ENCODE measurements at regions of chr6 and their contacts with region 1.

Region 1: GRCh38 chr6:142692942-142693341 is 252.0 kb downstream of the HIVEP2 start:
- DNase-seq: peak; percentile 82
- H3K4me3 Mint-ChIP-seq: no peak overlapping the region
- H3K27ac Mint-ChIP-seq: no peak overlapping the region
- H3K4me1 Mint-ChIP-seq: peaks cover 43% of the 10 kb centered on the region
- H3K27me3 Mint-ChIP-seq: no peaks in the 10 kb centered on the region
- CTCF ChIP-seq: peak; percentile 85

Region 2: DNA sequence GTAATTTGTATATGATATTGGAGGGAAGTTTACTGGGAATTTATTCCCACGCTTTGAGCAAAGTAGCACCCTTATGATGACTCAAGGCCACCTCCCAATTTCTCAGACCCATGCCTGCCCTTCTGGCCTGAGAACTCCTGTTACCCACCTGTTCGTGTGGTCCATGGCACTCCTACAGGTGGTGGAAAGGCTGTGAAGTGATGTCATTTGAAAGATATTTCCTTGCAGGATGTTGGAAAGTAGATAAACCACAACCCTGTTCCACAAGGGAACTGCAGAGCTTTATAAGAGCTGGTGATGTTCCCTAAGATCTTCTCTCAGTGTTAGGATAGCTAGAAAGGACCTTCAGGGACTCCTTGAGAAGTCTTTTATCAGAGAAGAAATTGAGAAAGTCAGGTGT is 320.6 kb before region 1 on chr6:
- CTCF ChIA-PET with region 1: no interaction called
- POLR2A ChIA-PET with region 1: no interaction called
- intact Hi-C with region 1: no loop called
- DNase-seq: peak; percentile 76
- H3K4me3 Mint-ChIP-seq: no peak overlapping the region
- H3K27ac Mint-ChIP-seq: peak overlapping the region; percentile 75
- H3K4me1 Mint-ChIP-seq: peaks cover 34% of the 10 kb centered on the region
- H3K27me3 Mint-ChIP-seq: no peaks in the 10 kb centered on the region
- CTCF ChIP-seq: no peak

Region 3: DNA sequence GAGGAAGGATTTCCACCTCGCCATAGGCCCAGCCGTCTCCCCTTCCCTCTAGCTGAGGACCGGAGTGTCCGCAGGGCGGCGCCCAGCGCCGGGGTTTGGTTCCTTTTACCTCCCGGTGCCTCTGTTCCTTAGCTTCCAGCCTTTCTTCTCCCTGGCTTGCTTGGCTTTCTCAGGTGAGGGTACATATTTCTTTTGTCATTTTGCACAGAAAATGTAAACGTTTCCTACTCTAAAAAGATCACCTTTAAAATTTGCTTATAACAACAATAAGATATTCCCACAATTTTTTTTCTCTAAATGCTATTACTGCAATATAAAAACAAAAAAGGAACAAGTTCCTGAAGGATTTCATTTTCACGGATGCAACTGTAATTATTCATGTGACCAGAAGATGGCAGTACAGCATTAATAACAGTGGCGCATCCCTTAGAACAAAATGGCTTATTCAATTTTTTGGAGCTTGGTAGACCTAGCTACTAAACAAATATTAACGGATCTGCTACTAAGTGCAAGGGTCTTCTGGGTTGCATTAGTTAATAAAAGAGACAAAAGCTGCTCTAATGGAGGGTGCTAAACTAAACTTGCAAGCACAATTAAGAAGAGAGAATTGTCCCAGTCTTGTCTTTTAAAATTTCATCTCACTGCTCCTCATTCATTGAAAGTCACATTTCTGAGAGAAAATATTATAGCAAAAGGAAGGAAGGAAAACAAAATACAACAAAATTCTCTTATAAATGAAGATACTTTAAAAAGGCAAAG is 218.2 kb before region 1 on chr6:
- CTCF ChIA-PET with region 1: interaction called, 6 read pairs
- POLR2A ChIA-PET with region 1: no interaction called
- intact Hi-C with region 1: loop called (anchors 2 kb)
- DNase-seq: peak; percentile 72
- H3K4me3 Mint-ChIP-seq: no peak overlapping the region
- H3K27ac Mint-ChIP-seq: no peak overlapping the region
- H3K4me1 Mint-ChIP-seq: peaks cover 7% of the 10 kb centered on the region
- H3K27me3 Mint-ChIP-seq: peaks cover 5% of the 10 kb centered on the region
- CTCF ChIP-seq: peak; percentile 66

Region 4: DNA sequence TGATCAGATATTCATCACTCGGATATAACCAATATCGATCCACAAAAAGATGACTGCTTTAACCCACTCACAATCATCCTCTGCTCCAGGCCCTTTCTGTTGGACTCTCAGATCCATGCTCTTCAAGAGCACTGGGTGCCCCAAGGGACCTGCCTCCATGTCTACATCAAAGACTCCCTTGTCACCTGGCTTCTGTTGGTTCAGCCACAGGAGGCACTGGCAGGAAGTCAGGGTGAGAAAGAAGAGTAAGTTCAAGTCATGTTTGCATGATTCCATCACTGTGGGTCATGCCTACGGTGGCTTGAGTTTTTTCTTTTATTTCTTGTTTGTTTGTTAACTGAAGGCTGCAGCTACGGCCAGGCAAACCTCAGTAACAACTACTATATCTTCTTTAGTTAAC is 147.8 kb before region 1 on chr6:
- CTCF ChIA-PET with region 1: no interaction called
- POLR2A ChIA-PET with region 1: no interaction called
- intact Hi-C with region 1: no loop called
- DNase-seq: no peak
- H3K4me3 Mint-ChIP-seq: no peak overlapping the region
- H3K27ac Mint-ChIP-seq: no peak overlapping the region
- H3K4me1 Mint-ChIP-seq: peaks cover 8% of the 10 kb centered on the region
- H3K27me3 Mint-ChIP-seq: no peaks in the 10 kb centered on the region
- CTCF ChIP-seq: no peak

Region 5: DNA sequence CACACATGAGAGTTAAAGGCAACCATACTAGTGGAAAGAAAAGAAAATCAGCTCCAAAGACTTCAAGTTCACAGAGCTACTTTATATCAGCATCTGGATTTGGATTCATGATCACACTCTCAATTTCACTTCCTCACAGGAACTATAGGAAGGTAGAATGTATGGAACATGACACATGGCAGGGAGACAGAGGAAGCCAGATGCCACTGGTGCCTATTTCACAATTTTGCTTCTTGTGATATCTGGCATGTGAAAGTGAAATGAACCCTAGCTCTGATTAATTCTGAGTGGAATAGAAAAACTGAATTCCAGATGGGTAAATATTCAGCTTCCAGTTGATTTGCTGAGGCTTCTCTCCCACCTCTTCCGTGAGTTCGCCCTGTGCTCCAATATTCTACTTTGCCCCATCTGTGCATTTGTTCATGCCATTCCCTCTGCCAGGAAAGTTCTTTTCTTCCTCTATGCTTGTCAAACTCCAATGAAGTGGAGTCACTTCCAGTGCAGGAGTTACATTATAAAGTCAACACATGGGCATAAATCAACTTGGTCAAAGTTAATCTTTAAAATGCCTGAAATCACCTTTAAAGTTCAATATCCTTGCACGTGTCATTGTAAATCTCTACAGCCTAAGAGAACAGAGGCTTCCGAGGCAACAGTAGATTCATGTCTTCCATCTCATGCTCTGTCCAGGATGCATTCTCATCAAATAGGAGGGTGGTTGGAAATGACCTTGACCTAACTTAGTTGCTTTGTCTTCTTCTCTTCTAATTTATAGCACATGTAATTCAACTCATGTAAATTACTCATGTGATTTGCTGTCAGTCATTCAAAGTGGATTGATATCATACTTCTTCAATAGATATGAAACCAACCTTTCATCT is 23.2 kb before region 1 on chr6:
- CTCF ChIA-PET with region 1: no interaction called
- POLR2A ChIA-PET with region 1: no interaction called
- intact Hi-C with region 1: no loop called
- DNase-seq: no peak
- H3K4me3 Mint-ChIP-seq: no peak overlapping the region
- H3K27ac Mint-ChIP-seq: no peak overlapping the region
- H3K4me1 Mint-ChIP-seq: no peaks in the 10 kb centered on the region
- H3K27me3 Mint-ChIP-seq: peaks cover under 1% of the 10 kb centered on the region
- CTCF ChIP-seq: no peak

Region 6: DNA sequence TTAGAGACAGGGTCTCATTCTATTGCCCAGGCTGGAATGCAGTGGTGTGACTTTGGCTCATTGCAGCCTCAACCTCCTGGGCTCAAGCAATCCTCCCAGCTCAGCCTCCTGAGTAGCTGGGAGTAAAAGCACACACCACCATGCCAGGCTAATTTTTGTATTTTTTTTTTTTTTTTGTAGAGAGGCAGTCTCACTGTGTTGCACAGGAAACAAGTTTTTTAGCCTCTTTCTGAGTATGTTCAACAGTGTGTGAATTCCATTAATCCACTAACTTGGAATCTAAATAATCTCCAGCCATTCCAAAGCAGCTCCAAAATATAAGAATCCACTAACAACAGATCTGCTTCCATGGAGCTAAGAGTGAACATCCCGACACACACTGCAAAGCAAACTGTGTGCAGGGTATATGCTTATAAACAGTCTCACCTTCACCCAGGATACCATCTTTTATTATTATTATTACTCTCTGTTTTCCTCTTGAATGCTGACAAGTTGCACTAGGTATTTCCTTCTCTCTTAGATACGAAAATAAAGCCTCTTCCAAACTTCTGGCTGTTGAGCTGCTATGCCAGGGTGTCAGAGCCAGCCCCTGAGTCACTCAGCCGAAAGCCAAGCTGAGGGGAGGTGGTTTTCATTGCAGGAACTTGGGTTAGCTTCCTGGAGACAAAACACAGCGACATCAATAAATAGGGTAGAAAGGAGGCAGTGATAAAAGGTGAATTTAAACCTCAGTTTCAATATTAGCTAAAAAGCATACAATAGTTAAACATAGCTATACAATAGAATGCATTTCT is 12.8 kb before region 1 on chr6:
- CTCF ChIA-PET with region 1: interaction called, 13 read pairs
- POLR2A ChIA-PET with region 1: no interaction called
- intact Hi-C with region 1: no loop called
- DNase-seq: no peak
- H3K4me3 Mint-ChIP-seq: no peak overlapping the region
- H3K27ac Mint-ChIP-seq: no peak overlapping the region
- H3K4me1 Mint-ChIP-seq: peaks cover 8% of the 10 kb centered on the region
- H3K27me3 Mint-ChIP-seq: peaks cover 36% of the 10 kb centered on the region
- CTCF ChIP-seq: no peak

Region 7: DNA sequence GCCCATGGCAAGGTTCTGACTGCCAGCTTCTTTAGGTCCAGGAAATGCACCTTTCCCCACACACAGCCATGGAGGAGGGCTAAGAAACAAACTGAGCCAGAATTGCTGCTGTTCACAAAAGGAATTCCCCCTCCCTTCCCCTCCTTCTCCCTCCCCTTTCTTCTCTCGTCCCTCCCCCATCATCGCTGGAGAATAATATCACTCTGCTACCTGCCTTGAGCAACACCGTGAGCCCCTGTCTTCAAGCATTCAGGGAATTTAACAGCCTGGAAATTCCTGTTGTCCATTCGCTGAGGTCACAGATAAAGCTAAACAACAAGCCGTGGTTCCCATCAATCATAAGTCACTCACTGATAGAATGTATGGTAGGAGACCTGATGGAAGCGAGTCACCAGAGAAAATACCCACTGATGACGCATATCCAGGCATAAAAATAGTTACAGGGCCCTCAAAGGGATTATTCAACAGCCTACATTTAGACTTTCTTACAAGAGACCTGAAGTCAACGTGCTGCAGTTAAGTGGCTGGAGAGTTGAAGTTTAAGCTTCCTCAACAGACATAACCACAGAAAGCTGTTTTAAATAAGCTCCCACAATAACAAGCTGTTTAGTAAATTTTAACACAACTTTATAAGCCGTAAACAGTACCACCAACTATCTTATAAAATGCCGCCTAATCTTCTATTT is 192.4 kb after region 1 on chr6:
- CTCF ChIA-PET with region 1: interaction called, 9 read pairs
- POLR2A ChIA-PET with region 1: no interaction called
- intact Hi-C with region 1: loop called (anchors 1 kb)
- DNase-seq: peak; percentile 97
- H3K4me3 Mint-ChIP-seq: peak overlapping the region; percentile 71
- H3K27ac Mint-ChIP-seq: peak overlapping the region; percentile 36
- H3K4me1 Mint-ChIP-seq: peaks cover 32% of the 10 kb centered on the region
- H3K27me3 Mint-ChIP-seq: no peaks in the 10 kb centered on the region
- CTCF ChIP-seq: no peak

Region 8: GRCh38 chr6:143060354-143060805 is 367.4 kb after region 1 on chr6:
- CTCF ChIA-PET with region 1: no interaction called
- POLR2A ChIA-PET with region 1: no interaction called
- intact Hi-C with region 1: loop called (anchors 5 kb)
- DNase-seq: peak; percentile 90
- H3K4me3 Mint-ChIP-seq: peak overlapping the region; percentile 94
- H3K27ac Mint-ChIP-seq: peak overlapping the region; percentile 97
- H3K4me1 Mint-ChIP-seq: peaks cover 37% of the 10 kb centered on the region
- H3K27me3 Mint-ChIP-seq: no peaks in the 10 kb centered on the region
- CTCF ChIP-seq: no peak

Region 9: DNA sequence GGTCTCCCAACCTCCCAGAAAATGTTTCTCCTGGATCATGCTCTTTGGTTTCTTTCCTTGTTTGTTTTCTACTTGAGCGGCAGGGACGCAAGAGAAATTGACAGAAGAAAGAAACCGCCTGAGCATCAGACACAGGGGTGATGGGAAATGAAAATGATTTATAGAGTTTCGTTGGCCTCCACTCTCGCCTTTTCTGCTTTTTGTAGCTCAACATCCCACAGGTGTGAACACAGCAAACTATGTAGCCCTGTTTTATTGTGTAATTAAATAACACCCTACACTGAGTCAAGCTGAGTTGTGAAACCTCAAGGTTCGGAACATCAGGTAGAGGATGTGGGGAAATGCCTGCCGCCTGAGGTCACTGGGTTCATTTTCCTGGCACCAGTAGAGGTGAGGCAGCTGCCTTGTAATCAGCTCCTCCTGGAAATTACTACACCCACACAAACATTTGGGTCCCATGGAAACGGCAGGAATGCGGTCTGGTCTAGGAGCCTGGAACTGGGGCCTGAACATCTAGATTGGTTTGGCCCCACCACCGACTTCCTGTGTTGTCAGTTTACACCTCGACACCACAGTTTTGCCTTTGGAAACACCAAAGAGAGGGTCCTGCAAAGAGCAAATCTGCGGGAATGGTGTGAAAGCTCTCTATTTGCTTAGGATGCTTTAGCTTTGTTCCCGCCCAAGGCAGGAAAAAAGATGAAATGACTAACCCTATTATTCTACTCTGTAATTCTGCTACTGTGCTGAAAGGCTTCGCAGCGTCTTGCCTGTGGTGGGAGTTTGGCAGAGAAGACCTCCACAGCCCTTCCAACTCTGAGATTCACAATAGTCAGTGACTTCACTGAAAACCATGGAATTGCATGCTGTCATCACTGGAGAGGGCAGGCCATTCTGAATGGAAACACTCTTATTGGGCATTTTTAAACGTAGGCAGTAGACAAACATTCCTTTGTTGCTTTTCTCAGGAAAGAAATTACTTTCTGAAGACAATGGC is 704.6 kb after region 1 on chr6:
- CTCF ChIA-PET with region 1: interaction called, 5 read pairs
- POLR2A ChIA-PET with region 1: no interaction called
- intact Hi-C with region 1: loop called (anchors 1 kb)
- DNase-seq: peak; percentile 99
- H3K4me3 Mint-ChIP-seq: peak overlapping the region; percentile 24
- H3K27ac Mint-ChIP-seq: peak overlapping the region; percentile 100
- H3K4me1 Mint-ChIP-seq: peaks cover 73% of the 10 kb centered on the region
- H3K27me3 Mint-ChIP-seq: no peaks in the 10 kb centered on the region
- CTCF ChIP-seq: no peak

Region 10: DNA sequence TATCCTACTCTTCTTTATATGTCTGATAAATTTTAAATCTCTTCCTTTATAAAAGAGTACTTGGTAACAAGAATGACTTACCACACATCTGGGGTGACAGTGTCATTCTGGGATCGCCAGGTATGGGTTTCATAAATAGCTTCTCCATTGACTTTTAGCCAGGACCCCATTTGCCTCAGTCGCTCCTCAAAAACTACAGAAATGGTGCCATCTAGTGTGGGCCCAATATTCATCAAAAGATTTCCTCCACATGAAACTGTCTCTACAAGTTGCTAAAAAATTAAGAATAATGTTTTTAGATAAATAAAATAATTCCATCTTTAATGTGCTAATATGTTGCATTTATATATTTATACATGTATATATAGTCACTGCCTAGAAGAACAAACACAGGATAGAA is 808.9 kb after region 1 on chr6:
- CTCF ChIA-PET with region 1: interaction called, 4 read pairs
- POLR2A ChIA-PET with region 1: interaction called, 3 read pairs
- intact Hi-C with region 1: loop called (anchors 5 kb)
- DNase-seq: no peak
- H3K4me3 Mint-ChIP-seq: no peak overlapping the region
- H3K27ac Mint-ChIP-seq: no peak overlapping the region
- H3K4me1 Mint-ChIP-seq: no peaks in the 10 kb centered on the region
- H3K27me3 Mint-ChIP-seq: no peaks in the 10 kb centered on the region
- CTCF ChIP-seq: no peak

Measured in MCF 10A (cell line).